ENCODE measurements at regions of chr6 and their contacts with region 1.

Region 1: DNA sequence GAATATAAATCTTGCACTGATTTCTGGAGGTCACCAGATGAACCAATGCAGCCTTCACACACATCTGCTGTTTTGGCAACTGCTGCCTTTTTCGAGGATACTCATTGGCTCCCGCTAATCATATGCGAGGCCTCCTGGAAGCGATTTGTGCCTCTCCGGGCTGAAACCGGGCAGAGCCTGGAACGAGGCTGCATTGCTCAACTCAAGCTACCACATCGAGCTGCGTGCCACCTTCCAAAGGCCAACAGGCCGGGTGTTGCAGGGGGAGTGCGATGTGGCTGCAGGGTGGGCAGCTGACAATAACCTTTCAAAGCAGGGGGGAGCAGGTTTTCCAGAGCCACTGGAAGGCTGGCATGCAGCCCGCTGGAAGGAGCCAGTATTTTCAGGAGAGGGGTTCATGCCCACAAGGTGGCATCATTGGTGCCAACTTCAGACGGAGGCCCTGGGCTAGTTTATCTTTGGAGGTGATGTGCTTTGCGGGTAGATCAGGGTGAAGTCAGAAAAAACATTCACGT is 122.6 kb upstream of the IFNGR1 start:
- DNase-seq: peak in 34 of 35 experiments; percentile 20 to 76 (median 38)
- ATAC-seq: peak; percentile 66 to 83 (median 76)
- H3K4me3 ChIP-seq: no peak overlapping the region
- H3K4me3 Mint-ChIP-seq: peak overlapping the region; percentile 73 to 79 (median 76)
- H3K27ac ChIP-seq: no peak overlapping the region
- H3K27ac Mint-ChIP-seq: no peak overlapping the region
- H3K4me1 ChIP-seq: peaks cover 0 to 13% of the 10 kb centered on the region in 2 experiments
- H3K4me1 Mint-ChIP-seq: peaks cover 14 to 22% (median 20%) of the 10 kb centered on the region in 3 donors
- H3K27me3 ChIP-seq: peaks cover 0 to 6% of the 10 kb centered on the region in 2 experiments
- H3K27me3 Mint-ChIP-seq: peaks cover 0 to under 1% of the 10 kb centered on the region in 2 donors

Region 2: GRCh38 chr6:137076277-137077068 is 265.3 kb before region 1 on chr6:
- CTCF ChIA-PET with region 1: no interaction called
- POLR2A ChIA-PET with region 1: no interaction called
- DNase-seq: peak in 32 of 35 experiments; percentile 9 to 70 (median 32)
- ATAC-seq: peak; percentile 76 to 82 (median 77)
- H3K4me3 ChIP-seq: no peak overlapping the region
- H3K4me3 Mint-ChIP-seq: no peak overlapping the region
- H3K27ac ChIP-seq: no peak overlapping the region
- H3K27ac Mint-ChIP-seq: no peak overlapping the region
- H3K4me1 ChIP-seq: no peaks in the 10 kb centered on the region
- H3K4me1 Mint-ChIP-seq: no peaks in the 10 kb centered on the region
- H3K27me3 ChIP-seq: peaks cover 0 to 3% of the 10 kb centered on the region in 2 experiments
- H3K27me3 Mint-ChIP-seq: peaks cover 19 to 42% of the 10 kb centered on the region in 2 donors

Region 3: DNA sequence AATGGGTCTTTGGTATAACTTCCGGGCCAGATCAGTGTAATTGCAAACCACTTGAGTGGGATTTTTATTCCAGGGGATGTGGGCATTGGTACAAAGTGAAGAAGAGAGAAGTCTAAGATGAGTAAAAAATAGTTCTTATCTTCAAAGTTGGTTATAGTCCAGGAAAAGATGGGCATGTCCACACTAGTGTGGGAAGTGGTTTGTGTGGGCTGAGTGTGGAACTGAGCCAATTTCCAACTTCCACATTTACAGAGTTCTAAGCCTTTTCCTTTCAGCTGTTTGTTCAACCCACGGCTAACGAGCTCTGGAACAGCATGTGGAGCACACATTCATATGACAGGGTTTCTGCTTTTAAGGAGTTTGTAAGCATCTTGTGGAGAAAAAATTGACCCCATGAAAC is 50.3 kb before region 1 on chr6:
- CTCF ChIA-PET with region 1: no interaction called
- POLR2A ChIA-PET with region 1: no interaction called
- DNase-seq: peak in 5 of 35 experiments; percentile 3 to 38 (median 10)
- ATAC-seq: no peak
- H3K4me3 ChIP-seq: no peak overlapping the region
- H3K4me3 Mint-ChIP-seq: no peak overlapping the region
- H3K27ac ChIP-seq: no peak overlapping the region
- H3K27ac Mint-ChIP-seq: no peak overlapping the region
- H3K4me1 ChIP-seq: peaks cover 0 to 7% of the 10 kb centered on the region in 2 experiments
- H3K4me1 Mint-ChIP-seq: peaks cover 5 to 11% (median 7%) of the 10 kb centered on the region in 3 donors
- H3K27me3 ChIP-seq: no peaks in the 10 kb centered on the region
- H3K27me3 Mint-ChIP-seq: no peaks in the 10 kb centered on the region

Region 4: DNA sequence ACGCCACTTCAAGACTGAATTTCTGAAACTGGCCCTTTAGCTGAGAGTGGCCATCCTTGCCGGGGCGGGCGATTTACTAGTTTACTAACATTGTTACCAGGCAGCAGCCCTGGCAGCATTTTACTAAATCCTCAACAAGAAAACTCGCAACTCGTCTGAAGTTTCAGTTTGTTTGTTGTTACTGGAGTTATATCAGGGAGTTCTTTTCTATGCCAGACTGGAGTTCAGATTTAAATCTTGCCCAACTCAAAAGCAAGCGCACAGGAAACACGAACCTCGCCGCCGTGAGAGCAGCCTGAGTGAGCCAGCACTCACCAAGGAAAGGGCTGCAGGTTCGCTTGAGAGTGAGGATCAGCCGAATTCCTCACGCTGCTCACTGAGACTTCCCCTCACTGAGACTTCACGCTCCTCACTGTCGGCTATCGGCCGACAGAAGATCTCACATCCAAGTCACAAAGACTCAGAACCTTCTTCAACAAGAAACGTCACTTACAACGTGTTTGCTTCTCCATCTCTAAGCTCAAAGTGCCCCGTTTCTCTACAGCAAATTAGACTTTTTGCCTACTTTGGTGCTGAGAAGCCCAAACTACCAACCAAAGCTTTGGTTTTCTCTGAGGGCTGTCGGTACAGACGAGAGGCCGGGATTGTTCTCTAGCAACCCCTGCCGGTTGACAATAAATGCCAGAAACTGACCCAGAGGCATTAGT is 73.5 kb after region 1 on chr6:
- CTCF ChIA-PET with region 1: interaction called, 21 to 25 read pairs
- POLR2A ChIA-PET with region 1: no interaction called
- DNase-seq: peak; percentile 22 to 83 (median 54)
- ATAC-seq: peak; percentile 91 to 95 (median 94)
- H3K4me3 ChIP-seq: peak overlapping the region; percentile 54 to 64
- H3K4me3 Mint-ChIP-seq: peak overlapping the region; percentile 70 to 81 (median 81)
- H3K27ac ChIP-seq: peak overlapping the region; percentile 77
- H3K27ac Mint-ChIP-seq: peak overlapping the region; percentile 90 to 91
- H3K4me1 ChIP-seq: peaks cover 3 to 16% of the 10 kb centered on the region in 2 experiments
- H3K4me1 Mint-ChIP-seq: peaks cover 12 to 14% (median 13%) of the 10 kb centered on the region in 3 donors
- H3K27me3 ChIP-seq: peaks cover 0 to 3% of the 10 kb centered on the region in 2 experiments
- H3K27me3 Mint-ChIP-seq: no peaks in the 10 kb centered on the region

Measured in T-cell (primary cell).